WTC11 (cell line): ENCODE measurements at regions of chr1 and their contacts with region 1.

Region 1: DNA sequence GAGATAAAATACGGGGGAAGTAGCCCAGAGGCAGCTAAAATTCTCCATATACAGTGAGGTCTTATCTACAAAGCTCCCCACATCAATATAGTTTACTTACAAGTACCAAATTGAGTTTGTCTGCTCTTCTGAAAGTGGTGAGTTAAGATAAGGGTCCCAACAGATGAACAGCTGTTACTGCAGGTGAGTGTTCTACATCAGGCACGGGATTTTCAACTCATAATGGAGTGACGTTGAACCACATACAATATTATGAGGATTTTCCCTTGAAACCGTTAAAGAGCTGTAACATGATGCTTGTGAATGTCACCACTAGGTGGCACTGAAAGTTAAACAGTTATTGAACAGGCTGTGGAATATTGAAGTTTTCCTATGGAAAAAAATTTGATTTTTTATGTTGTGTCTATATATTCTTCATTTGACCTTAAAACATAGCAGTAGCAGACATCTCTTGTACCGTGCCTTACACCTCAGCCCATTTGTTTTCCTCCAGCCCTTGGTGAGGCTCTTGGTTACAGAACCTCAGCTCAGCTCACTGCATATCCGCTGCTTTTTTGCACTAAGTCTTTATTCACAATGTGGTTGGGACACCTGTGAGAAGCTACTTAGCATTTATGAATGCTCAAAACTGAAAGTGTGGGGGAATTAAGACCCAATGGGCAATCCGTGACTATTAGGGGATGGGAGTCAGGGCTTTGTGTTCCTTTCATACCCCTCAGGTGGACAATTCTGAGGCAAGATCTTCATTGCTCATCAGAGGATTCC is 23.2 kb downstream of the CD1D start:
- DNase-seq: no peak
- ATAC-seq: peak; percentile 82
- H3K4me3 Mint-ChIP-seq: peak overlapping the region; percentile 51
- H3K27ac Mint-ChIP-seq: no peak overlapping the region
- H3K4me1 Mint-ChIP-seq: peaks cover 18% of the 10 kb centered on the region
- H3K27me3 Mint-ChIP-seq: no peaks in the 10 kb centered on the region
- CTCF ChIP-seq: peak; percentile 65

Region 2: GRCh38 chr1:158118713-158119402 is 85.0 kb before region 1 on chr1:
- CTCF ChIA-PET with region 1: no interaction called
- POLR2A ChIA-PET with region 1: no interaction called
- DNase-seq: no peak
- ATAC-seq: no peak
- H3K4me3 Mint-ChIP-seq: peak overlapping the region; percentile 51; the same call in 1 of the 2 replicates
- H3K27ac Mint-ChIP-seq: no peak overlapping the region; the same call in 1 of the 2 replicates
- H3K4me1 Mint-ChIP-seq: peaks cover 62% of the 10 kb centered on the region
- H3K27me3 Mint-ChIP-seq: peaks cover 20% of the 10 kb centered on the region
- CTCF ChIP-seq: no peak

Region 3: GRCh38 chr1:158180741-158181576 is 22.9 kb before region 1 on chr1 and contains the start of gene CD1D:
- CTCF ChIA-PET with region 1: interaction called, 15 read pairs
- POLR2A ChIA-PET with region 1: interaction called, 5 read pairs
- DNase-seq: peak; percentile 64
- ATAC-seq: peak; percentile 55
- H3K4me3 Mint-ChIP-seq: peak within 1 kb of the TSS; percentile 92
- H3K27ac Mint-ChIP-seq: no peak within 1 kb of the TSS
- H3K4me1 Mint-ChIP-seq: peaks cover 45% of the 10 kb centered on the region
- H3K27me3 Mint-ChIP-seq: peaks cover 90% of the 10 kb centered on the region
- CTCF ChIP-seq: no peak
- total RNA-seq, gene CD1D: 3.8 to 4.7 TPM (median 3.9 TPM) in 3 replicates

Region 4: GRCh38 chr1:158185770-158186705 is 17.8 kb before region 1 on chr1:
- CTCF ChIA-PET with region 1: interaction called, 15 read pairs
- POLR2A ChIA-PET with region 1: interaction called, 5 read pairs
- DNase-seq: no peak
- ATAC-seq: peak; percentile 42
- H3K4me3 Mint-ChIP-seq: no peak overlapping the region
- H3K27ac Mint-ChIP-seq: no peak overlapping the region
- H3K4me1 Mint-ChIP-seq: peaks cover 49% of the 10 kb centered on the region
- H3K27me3 Mint-ChIP-seq: peaks cover 39% of the 10 kb centered on the region
- CTCF ChIP-seq: no peak

Region 5: GRCh38 chr1:158295791-158296190 is 91.9 kb after region 1 on chr1:
- CTCF ChIA-PET with region 1: no interaction called
- POLR2A ChIA-PET with region 1: no interaction called
- DNase-seq: no peak
- ATAC-seq: no peak
- H3K4me3 Mint-ChIP-seq: no peak overlapping the region
- H3K27ac Mint-ChIP-seq: no peak overlapping the region
- H3K4me1 Mint-ChIP-seq: no peaks in the 10 kb centered on the region
- H3K27me3 Mint-ChIP-seq: no peaks in the 10 kb centered on the region
- CTCF ChIP-seq: no peak

Region 6: GRCh38 chr1:158329733-158330132 is 125.9 kb after region 1 on chr1:
- CTCF ChIA-PET with region 1: interaction called, 48 read pairs
- POLR2A ChIA-PET with region 1: no interaction called
- DNase-seq: peak; percentile 19
- ATAC-seq: peak; percentile 76
- H3K4me3 Mint-ChIP-seq: no peak overlapping the region
- H3K27ac Mint-ChIP-seq: no peak overlapping the region
- H3K4me1 Mint-ChIP-seq: no peaks in the 10 kb centered on the region
- H3K27me3 Mint-ChIP-seq: no peaks in the 10 kb centered on the region
- CTCF ChIP-seq: no peak

Region 7: DNA sequence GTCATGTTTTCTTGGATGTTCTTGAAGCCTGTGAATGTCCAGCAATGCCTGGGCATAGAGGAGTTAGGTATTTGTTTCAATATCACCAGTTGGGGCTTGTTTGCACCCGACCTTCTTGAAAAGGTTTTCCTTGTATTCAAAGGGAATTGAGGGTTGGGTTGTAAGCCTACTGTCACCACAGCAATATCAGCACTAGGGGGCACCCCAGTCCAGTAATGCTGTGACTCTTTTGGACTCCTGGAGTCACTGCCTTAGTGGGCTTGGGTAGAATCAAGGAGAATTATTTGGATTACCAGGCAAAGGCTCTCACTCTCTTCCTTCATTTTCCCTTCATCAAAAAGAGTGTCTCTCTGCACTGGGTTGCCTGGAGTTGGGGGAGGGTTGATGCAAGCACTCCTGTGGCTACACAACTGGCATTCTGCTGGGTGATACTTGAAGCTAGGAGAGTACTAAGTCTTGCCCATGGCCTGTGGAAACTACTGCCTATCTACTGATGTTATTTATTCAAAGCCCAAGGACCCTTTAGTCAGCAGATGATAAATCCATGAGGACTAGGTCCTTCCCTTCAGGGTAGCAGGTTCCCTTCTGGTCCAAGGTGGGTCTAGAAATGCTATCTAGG is 302.6 kb after region 1 on chr1:
- CTCF ChIA-PET with region 1: interaction called, 10 read pairs
- POLR2A ChIA-PET with region 1: no interaction called
- DNase-seq: peak; percentile 82
- ATAC-seq: peak; percentile 98
- H3K4me3 Mint-ChIP-seq: no peak overlapping the region
- H3K27ac Mint-ChIP-seq: no peak overlapping the region
- H3K4me1 Mint-ChIP-seq: peaks cover 16% of the 10 kb centered on the region
- H3K27me3 Mint-ChIP-seq: no peaks in the 10 kb centered on the region; the same call in 1 of the 2 replicates
- CTCF ChIP-seq: peak; percentile 74